Transverse colon (tissue), 4 donors: ENCODE measurements at regions of chr1 and their contacts with region 1.

Region 1: DNA sequence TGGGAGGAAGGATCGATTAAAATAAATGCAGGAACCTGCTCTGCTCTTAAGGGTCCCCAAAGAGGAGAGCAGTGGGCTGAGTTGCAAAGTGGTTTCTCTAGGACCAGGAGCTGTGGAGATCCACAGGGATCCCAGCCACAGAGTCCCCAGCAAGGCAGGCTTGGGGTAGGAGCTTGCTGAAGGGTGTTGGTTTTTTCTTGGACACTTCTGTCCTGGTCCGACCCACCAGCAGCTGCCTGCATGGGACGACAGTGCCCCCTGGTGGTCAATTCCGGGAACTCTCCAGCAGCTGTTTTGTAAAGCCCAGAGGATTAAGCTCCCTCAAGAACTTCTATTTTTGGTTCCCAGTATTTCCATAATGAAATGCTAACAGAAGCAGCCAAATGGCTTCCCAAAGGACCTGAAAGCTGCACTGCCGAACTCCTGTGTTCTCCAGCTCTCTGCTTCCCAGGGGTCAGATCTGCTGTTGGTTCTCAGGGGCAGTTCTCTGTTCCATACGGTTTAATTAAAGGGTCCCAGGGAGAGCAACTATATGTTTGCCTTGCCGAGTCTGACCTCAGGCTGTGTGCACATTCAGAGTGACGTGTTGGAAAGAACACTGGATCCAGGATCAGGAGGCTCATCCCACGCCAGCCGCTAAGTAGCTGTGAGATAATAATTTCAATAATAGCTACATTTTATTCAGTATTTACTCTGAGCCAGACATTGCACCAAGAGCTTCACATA is 23.2 kb downstream of the NENF start:
- DNase-seq: peak; percentile 89
- H3K4me3 ChIP-seq: no peak overlapping the region
- H3K27ac ChIP-seq: peak overlapping the region in 2 of 4 donors; percentile 26 to 36
- H3K4me1 ChIP-seq: peaks cover 0 to 14% (median 3%) of the 10 kb centered on the region in 4 donors
- H3K27me3 ChIP-seq: no peaks in the 10 kb centered on the region
- CTCF ChIP-seq: peak; percentile 92 to 99 (median 98)
- EP300 ChIP-seq: no peak
- POLR2A ChIP-seq: no peak

Region 2: DNA sequence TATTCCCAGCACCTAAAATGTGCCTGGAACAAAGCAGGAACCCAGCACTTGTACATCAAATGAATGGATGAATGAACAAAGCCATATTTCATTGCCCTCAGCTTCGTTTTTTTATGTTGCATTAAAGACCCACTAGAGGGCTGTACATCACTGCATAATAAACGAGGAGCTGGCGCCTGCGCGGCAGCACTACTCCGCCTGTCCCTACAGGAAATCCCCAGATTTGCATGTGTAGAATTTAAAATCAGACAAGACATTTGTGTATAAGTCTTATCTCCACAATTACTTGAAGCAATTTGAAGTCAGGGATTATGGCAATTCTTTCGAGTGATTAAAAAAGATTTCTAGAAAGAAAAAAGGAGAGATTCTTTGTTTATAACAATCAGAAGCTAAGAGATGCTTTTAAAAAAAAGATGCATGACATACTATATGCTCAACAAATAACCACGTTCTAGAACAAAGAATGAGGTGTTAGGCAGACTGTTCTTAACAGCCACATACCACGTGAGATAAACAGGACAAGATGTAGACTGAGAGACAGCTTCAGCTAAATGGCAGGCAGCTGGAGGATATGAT is 775.1 kb before region 1 on chr1:
- in situ Hi-C with region 1: loop called in 1 of 4 experiments (anchors 25 kb)
- intact Hi-C with region 1: no loop called
- DNase-seq: peak; percentile 69
- H3K4me3 ChIP-seq: no peak overlapping the region
- H3K27ac ChIP-seq: no peak overlapping the region
- H3K4me1 ChIP-seq: peaks cover 0 to 9% (median 3%) of the 10 kb centered on the region in 4 donors
- H3K27me3 ChIP-seq: no peaks in the 10 kb centered on the region
- CTCF ChIP-seq: peak; percentile 58 to 90 (median 71)
- EP300 ChIP-seq: no peak
- POLR2A ChIP-seq: no peak

Region 3: GRCh38 chr1:212070720-212071302 is 385.2 kb before region 1 on chr1:
- in situ Hi-C with region 1: loop called (anchors 5 to 10 kb)
- intact Hi-C with region 1: loop called (anchors 5 kb)
- DNase-seq: no peak
- H3K4me3 ChIP-seq: no peak overlapping the region
- H3K27ac ChIP-seq: no peak overlapping the region
- H3K4me1 ChIP-seq: peaks cover 0 to 5% (median 0%) of the 10 kb centered on the region in 4 donors
- H3K27me3 ChIP-seq: no peaks in the 10 kb centered on the region
- CTCF ChIP-seq: peak; percentile 68 to 76 (median 73)
- EP300 ChIP-seq: no peak
- POLR2A ChIP-seq: no peak

Region 4: DNA sequence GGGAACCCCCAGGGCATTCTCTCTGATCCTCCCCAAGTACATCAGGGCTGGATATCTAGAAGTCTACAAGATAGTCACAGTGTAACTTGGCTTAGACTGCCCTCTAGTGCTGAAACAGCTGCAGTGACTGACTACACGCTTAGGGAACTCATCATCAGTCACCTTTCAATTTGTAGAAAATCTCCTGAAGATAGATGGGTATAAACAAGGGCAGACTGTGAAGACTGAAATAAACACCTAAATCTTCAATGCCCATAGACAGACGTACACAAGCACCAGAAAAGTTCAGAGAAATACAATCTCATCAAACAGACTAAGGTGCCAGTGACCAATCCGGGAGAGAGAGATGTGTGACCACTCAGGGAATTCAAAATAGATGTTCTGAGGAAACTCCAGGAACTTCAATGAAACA is 87.9 kb before region 1 on chr1:
- in situ Hi-C with region 1: loop called in 2 of 4 experiments (anchors 10 kb)
- intact Hi-C with region 1: loop called (anchors 5 kb)
- DNase-seq: peak; percentile 50
- H3K4me3 ChIP-seq: no peak overlapping the region
- H3K27ac ChIP-seq: no peak overlapping the region
- H3K4me1 ChIP-seq: no peaks in the 10 kb centered on the region
- H3K27me3 ChIP-seq: no peaks in the 10 kb centered on the region
- CTCF ChIP-seq: peak; percentile 76 to 81 (median 79)
- EP300 ChIP-seq: no peak
- POLR2A ChIP-seq: no peak

Region 5: DNA sequence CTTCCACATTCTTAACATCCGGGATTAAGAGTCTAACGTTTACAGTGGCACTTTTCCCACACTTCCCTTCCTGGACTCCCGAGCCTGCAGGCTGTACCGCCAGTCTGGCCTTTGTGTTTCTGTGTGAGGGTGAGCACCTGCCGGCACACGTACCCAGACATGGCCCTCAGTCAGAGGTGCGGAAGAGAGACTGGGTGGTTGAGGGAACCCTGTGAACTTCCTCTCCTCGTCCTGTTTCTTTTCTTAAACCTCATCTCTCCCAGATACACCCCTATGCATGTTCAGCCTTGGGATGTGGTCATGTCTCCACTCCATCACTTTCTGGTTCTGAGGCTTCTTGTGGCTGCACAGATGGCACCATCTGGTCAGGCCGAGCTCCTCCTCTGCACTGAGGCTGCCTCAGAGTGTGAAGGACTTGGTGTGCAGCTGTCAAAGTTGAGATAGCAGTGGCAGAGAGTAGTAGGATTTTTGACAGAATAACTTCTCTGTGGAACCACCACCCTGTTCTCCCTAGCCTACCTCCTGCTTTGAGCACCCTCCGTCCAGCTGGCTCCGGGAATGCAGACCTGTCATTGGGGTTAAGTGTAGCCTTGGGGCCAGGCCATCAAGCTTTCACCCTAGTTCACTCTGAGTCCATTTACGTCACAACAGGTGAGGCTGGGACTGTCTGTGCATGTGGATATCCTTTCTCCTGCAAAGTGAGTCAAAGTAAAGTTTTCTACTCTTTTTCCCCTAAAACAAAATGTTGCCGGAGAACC is 525.8 kb after region 1 on chr1:
- in situ Hi-C with region 1: loop called in 1 of 4 experiments (anchors 25 kb)
- intact Hi-C with region 1: no loop called
- DNase-seq: no peak
- H3K4me3 ChIP-seq: no peak overlapping the region
- H3K27ac ChIP-seq: no peak overlapping the region
- H3K4me1 ChIP-seq: peaks cover 0 to 11% (median 1%) of the 10 kb centered on the region in 4 donors
- H3K27me3 ChIP-seq: no peaks in the 10 kb centered on the region
- CTCF ChIP-seq: no peak
- EP300 ChIP-seq: no peak
- POLR2A ChIP-seq: no peak